Activated CD4-positive, alpha-beta T cell treated with anti-CD3 and anti-CD28 coated beads for 36 hours (primary cell): ENCODE measurements at regions of chr6 and their contacts with region 1.

Region 1: DNA sequence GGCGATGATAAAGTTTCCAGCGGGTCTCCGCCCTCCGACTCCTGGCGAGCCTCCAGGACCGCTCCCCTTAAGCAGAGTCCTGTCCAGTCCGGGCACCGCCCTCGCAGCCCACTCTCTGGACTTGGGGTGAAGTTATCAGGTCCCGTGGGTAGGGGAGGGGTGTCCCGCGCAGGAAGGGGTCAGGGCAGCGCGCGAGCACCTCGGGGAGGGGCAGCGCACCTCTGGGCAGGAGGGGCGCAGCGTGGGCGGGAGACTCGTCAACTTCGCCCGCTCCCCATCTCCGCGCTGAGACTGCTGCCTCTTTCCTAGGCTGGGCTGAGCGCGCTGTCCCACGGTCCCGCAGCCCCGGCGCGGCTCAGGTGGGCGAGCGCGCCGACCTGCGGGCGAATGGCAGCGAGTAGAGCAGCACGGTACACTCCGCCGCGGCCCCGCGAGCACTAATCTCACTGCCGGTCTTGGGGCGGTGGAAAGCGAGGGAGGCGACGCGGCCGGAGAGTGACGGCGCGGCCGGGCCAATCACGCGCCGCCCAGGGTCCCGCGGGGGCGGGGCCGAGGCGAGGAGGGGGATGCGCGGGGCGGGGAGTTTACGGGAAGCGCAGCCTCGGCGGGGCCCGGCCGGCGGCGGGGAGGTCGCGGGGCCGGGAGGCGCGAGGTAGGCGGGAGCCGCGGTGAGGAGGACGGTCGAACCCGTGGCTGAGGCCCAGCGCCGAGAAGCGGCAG is at the start of gene MAN1A1:
- DNase-seq: peak; percentile 93
- ATAC-seq: peak; percentile 87
- H3K4me3 Mint-ChIP-seq: peak within 1 kb of the TSS; percentile 84
- H3K27ac Mint-ChIP-seq: peak within 1 kb of the TSS; percentile 95
- H3K4me1 Mint-ChIP-seq: peaks cover 39% of the 10 kb centered on the region
- H3K27me3 Mint-ChIP-seq: no peaks in the 10 kb centered on the region
- total RNA-seq, gene MAN1A1: 15.3 to 18.4 TPM

Region 2: DNA sequence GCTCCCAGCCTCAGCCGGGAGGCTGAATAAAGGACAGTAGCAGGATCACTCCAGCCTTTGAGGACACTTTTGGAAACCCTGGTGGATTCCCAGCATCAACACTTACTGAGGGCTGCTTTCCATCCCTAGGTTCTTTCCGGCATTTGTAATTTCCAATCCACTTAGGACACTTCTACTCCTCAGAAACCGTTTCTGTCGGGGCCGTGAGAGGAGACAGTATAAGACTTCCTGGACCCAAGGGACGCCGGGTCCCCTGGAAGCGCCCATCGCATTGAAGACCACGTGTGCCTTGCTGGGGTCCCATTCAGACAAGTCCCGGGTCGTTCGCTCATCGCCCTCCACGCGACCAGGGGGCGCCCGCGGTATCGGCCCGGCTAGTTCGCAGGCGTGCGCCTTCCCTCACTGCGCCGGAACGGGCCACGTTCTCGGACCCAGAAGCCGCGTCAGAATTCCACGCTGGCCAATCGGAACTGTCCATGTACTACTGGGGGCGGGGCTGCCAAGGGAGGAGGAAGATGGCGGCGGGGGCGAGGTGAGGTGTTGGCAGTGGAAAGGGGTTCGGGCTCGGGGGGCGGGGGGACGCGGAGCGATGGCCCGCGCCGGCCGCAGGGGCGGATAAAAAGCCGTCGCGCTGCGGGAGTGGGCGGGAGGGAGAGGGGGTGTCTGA is 1674.4 kb before region 1 on chr6 and contains the start of gene NUS1:
- CTCF ChIA-PET with region 1: no interaction called
- POLR2A ChIA-PET with region 1: no interaction called
- intact Hi-C with region 1: loop called in 1 of 2 experiments (anchors 5 kb)
- DNase-seq: peak; percentile 98
- ATAC-seq: peak; percentile 96
- H3K4me3 Mint-ChIP-seq: peak within 1 kb of the TSS; percentile 80
- H3K27ac Mint-ChIP-seq: peak within 1 kb of the TSS; percentile 92
- H3K4me1 Mint-ChIP-seq: peaks cover 46% of the 10 kb centered on the region
- H3K27me3 Mint-ChIP-seq: no peaks in the 10 kb centered on the region
- total RNA-seq, gene NUS1: 34.0 to 38.3 TPM

Region 3: GRCh38 chr6:118843685-118844390 is 505.6 kb before region 1 on chr6:
- CTCF ChIA-PET with region 1: no interaction called
- POLR2A ChIA-PET with region 1: no interaction called
- intact Hi-C with region 1: loop called in 1 of 2 experiments (anchors 1 kb)
- DNase-seq: peak; percentile 49
- ATAC-seq: peak; percentile 87
- H3K4me3 Mint-ChIP-seq: no peak overlapping the region
- H3K27ac Mint-ChIP-seq: peak overlapping the region; percentile 48
- H3K4me1 Mint-ChIP-seq: peaks cover 26% of the 10 kb centered on the region
- H3K27me3 Mint-ChIP-seq: no peaks in the 10 kb centered on the region

Region 4: GRCh38 chr6:119078376-119079282 is 270.9 kb before region 1 on chr6 and contains the start of gene FAM184A:
- CTCF ChIA-PET with region 1: no interaction called
- POLR2A ChIA-PET with region 1: no interaction called
- intact Hi-C with region 1: loop called (anchors 1 to 5 kb)
- DNase-seq: peak; percentile 82
- ATAC-seq: peak; percentile 37
- H3K4me3 Mint-ChIP-seq: peak within 1 kb of the TSS; percentile 77
- H3K27ac Mint-ChIP-seq: peak within 1 kb of the TSS; percentile 94
- H3K4me1 Mint-ChIP-seq: peaks cover 46% of the 10 kb centered on the region
- H3K27me3 Mint-ChIP-seq: no peaks in the 10 kb centered on the region
- total RNA-seq, gene FAM184A: 13.8 to 14.5 TPM

Region 5: GRCh38 chr6:119273272-119274196 is 75.9 kb before region 1 on chr6:
- CTCF ChIA-PET with region 1: no interaction called
- POLR2A ChIA-PET with region 1: no interaction called
- intact Hi-C with region 1: no loop called
- DNase-seq: no peak
- ATAC-seq: no peak
- H3K4me3 Mint-ChIP-seq: no peak overlapping the region
- H3K27ac Mint-ChIP-seq: no peak overlapping the region
- H3K4me1 Mint-ChIP-seq: peaks cover 6% of the 10 kb centered on the region
- H3K27me3 Mint-ChIP-seq: no peaks in the 10 kb centered on the region

Region 6: DNA sequence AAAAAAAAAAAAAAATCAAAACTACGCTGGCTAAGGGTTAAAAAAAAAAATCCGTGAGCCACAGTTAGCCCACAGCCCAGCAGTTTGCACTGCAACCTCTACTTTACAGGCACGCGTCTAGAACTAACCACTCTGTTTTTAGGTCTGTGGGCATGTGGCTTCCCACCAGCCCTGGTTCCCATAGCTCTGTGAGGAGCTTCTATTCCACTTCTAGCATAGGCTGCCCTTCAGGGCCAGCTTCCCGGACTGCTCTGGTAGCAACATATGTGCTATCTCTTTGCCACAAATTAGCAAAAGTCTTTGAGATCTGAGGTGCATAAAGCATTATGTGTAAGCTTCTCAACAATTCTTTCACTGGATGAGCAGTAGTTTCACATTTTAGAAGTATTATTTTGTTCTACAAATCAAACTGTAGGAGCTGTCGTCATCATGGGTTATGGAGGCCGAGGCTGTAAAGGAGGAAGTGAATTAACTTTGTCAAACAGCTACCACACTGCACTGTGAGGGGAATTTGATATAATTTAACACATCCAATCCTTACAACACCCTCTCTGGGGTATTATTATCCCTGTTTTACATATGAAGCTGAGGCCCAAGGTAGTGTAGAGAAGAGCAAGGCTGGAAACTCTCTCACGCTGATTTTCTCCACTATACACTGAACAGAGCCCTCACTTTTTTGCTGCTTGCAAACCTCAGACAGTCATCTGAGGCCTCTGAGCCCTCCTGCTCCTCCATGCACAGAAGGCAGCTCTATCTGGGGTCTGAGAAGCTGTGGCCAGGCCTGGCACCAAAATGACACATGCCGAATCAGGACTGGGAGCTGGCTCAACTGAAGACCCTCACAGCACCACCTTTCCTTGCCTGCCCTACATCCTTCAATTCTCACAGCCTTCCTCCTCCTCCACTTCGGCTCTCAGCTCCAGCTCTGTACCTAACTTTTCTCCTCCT is 35.3 kb before region 1 on chr6:
- CTCF ChIA-PET with region 1: interaction called, 10 read pairs
- POLR2A ChIA-PET with region 1: interaction called, 11 read pairs
- intact Hi-C with region 1: loop called (anchors 1 kb)
- DNase-seq: peak; percentile 60
- ATAC-seq: peak; percentile 73
- H3K4me3 Mint-ChIP-seq: peak overlapping the region; percentile 40
- H3K27ac Mint-ChIP-seq: peak overlapping the region; percentile 91
- H3K4me1 Mint-ChIP-seq: peaks cover 56% of the 10 kb centered on the region
- H3K27me3 Mint-ChIP-seq: no peaks in the 10 kb centered on the region

Region 7: DNA sequence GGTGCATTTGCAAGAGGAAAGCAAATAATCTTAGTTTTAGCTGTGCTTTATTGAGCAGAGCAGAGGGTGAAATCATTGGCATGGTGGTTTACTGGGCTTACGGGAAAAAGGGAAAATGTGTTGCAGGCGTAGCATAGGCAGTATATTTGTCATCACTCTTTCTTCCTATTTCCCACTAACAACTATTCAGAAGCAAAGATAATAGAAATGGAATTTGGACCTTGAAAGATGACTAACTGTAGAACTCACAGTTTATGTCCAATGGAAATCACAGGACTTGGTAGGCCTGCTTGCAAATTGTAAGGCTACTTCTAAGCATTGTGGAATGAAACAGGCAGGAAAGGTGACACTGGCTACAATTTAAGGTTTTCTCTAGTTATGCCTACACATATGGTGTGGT is 612.0 kb after region 1 on chr6:
- CTCF ChIA-PET with region 1: no interaction called
- POLR2A ChIA-PET with region 1: no interaction called
- intact Hi-C with region 1: no loop called
- DNase-seq: no peak
- ATAC-seq: no peak
- H3K4me3 Mint-ChIP-seq: no peak overlapping the region
- H3K27ac Mint-ChIP-seq: no peak overlapping the region
- H3K4me1 Mint-ChIP-seq: no peaks in the 10 kb centered on the region
- H3K27me3 Mint-ChIP-seq: no peaks in the 10 kb centered on the region

Region 8: GRCh38 chr6:121334299-121335086 is 1985.0 kb after region 1 on chr6 and contains the start of gene TBC1D32:
- CTCF ChIA-PET with region 1: no interaction called
- POLR2A ChIA-PET with region 1: no interaction called
- intact Hi-C with region 1: loop called in 1 of 2 experiments (anchors 1 kb)
- DNase-seq: peak; percentile 93
- ATAC-seq: peak; percentile 92
- H3K4me3 Mint-ChIP-seq: peak within 1 kb of the TSS; percentile 94
- H3K27ac Mint-ChIP-seq: peak within 1 kb of the TSS; percentile 98
- H3K4me1 Mint-ChIP-seq: peaks cover 33% of the 10 kb centered on the region
- H3K27me3 Mint-ChIP-seq: no peaks in the 10 kb centered on the region
- total RNA-seq, gene TBC1D32: 9.2 to 9.9 TPM